AG04450 (cell line): ENCODE measurements at regions of chr2 and their contacts with region 1.

Region 1: GRCh38 chr2:85728883-85729824 is 24.6 kb upstream of the ATOH8 start:
- DNase-seq: no peak
- H3K4me3 ChIP-seq: no peak overlapping the region
- H3K27ac ChIP-seq: no peak overlapping the region
- H3K27me3 ChIP-seq: peaks cover 10% of the 10 kb centered on the region
- CTCF ChIP-seq: peak; percentile 100

Region 2: GRCh38 chr2:85707304-85707703 is 21.9 kb before region 1 on chr2:
- CTCF ChIA-PET with region 1: interaction called, 39 read pairs
- POLR2A ChIA-PET with region 1: no interaction called
- DNase-seq: peak; percentile 87
- H3K4me3 ChIP-seq: no peak overlapping the region
- H3K27ac ChIP-seq: no peak overlapping the region
- H3K27me3 ChIP-seq: no peaks in the 10 kb centered on the region
- CTCF ChIP-seq: peak; percentile 89

Region 3: GRCh38 chr2:85741833-85742455 is 12.8 kb after region 1 on chr2:
- CTCF ChIA-PET with region 1: interaction called, 16 read pairs
- POLR2A ChIA-PET with region 1: interaction called, 3 read pairs
- DNase-seq: peak; percentile 89
- H3K4me3 ChIP-seq: peak overlapping the region; percentile 32
- H3K27ac ChIP-seq: peak overlapping the region; percentile 97
- H3K27me3 ChIP-seq: no peaks in the 10 kb centered on the region
- CTCF ChIP-seq: no peak; the same call in 1 of the 2 replicates

Region 4: DNA sequence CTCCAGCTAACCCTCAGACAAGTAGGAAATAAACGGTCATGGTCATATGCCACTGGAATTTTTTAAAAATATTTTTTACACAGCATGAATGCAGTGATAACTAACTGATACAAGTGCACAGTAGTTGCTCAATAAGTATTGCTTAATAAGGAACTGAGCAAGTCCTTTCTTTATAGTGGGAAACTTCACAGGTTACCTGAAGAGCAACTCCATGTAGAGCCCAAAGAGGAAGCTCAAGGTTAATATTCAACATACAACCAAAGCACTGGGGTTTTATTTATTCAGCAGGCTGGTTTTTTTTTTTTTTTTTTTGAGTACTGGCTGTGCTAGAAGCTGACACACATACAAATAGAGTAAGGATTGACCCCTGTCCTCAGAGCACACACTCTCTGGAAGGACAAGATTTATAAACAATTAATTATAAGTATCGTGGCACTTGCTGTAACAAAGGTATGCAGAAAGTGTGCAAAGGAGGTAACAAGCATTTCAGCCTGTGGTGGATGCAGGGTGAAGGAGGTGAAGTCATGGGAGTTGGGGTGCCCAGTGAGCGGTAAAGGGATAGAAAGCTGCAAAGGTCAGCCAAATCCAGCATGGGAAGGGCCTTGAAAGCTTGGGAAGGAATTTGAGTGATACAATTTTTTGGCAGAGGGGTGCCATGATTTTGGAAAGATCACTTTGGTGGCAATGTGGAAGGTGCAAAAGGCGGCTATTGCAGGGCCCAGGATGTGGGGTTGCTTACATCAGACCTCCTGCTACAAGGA is 77.4 kb after region 1 on chr2:
- CTCF ChIA-PET with region 1: interaction called, 203 read pairs
- POLR2A ChIA-PET with region 1: interaction called, 8 read pairs
- DNase-seq: no peak
- H3K4me3 ChIP-seq: no peak overlapping the region
- H3K27ac ChIP-seq: no peak overlapping the region
- H3K27me3 ChIP-seq: no peaks in the 10 kb centered on the region
- CTCF ChIP-seq: no peak

Region 5: GRCh38 chr2:86079981-86080911 is 351.1 kb after region 1 on chr2:
- CTCF ChIA-PET with region 1: interaction called, 16 read pairs
- POLR2A ChIA-PET with region 1: no interaction called
- DNase-seq: peak; percentile 21
- H3K4me3 ChIP-seq: no peak overlapping the region
- H3K27ac ChIP-seq: no peak overlapping the region
- H3K27me3 ChIP-seq: no peaks in the 10 kb centered on the region
- CTCF ChIP-seq: peak; percentile 84